ENCODE measurements at regions of chr9 and their contacts with region 1.

Region 1: DNA sequence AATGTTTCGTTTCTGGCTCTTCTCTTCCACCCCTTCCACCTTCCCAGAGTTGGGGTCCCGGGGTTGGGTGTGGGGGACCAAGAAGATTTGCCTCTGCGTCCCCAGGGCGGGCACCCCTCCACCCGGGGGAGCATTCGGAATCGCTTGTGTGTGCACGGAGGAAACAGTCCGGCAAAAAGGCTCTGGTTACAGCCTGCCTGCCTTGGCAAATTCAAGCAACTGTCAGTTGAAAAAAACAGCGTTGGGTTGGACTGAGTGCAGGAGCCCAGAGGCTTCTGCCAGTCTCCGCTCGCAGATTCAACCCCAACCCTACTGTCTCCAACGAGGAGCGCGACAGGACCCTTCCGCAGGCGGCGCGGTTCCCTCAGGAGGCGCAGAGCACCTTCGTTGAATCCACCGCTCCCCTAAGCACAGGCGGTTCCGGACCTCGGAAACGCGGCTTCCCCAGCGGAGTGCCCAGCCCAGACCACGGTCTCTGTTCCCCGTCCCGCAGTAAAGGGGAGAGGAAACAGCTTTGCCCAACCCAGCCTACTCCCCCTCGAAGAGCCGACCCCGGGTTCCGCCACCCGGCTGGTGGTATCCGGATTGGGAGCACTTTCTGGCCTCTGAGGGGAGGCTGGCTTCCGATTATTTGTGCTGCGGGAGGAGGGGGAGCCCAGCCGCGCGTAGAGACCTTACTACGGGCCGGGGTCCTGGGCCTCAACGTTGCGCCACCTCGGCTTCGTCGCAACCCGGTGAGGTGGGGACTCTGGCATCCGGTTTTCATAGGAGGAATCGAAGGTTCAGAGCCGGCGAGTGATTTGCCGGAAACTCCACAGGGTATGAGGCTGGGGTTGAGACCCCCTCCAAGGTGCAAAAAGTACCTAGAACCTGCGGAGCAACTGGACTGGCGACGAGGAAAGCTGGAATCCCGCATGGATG is 9.6 kb downstream of the LHX6 start:
- DNase-seq: peak; percentile 78

Region 2: DNA sequence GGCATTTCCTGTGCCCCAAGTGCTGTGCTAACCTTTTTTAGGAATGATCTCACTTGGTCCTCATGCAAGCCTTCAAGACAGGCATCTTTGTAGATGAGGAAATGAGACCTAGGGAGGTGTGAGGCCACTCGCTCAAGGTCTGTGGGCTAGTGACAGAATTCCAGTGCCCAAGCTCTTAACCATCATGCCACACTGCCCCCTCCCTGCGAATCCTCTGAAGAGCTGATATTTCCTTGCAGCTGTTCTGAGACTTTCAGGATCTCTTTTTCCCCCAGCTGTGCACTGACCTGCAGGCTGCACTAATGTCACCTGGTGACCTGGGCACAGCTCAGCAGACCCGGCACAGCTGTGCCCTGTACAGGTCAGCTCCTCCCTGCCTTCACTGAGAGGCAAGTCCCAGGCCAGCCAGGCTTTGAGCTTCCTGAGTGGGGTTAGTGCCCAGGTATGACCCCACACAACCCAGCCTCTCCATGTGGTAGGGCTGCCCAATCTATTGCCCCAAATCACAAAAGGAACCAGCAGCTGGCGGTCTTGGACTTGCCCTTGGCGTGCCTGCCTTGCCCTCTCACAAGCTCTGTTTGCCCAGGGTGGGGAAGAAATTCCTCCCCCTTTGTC is 26.8 kb before region 1 on chr9:
- intact Hi-C with region 1: loop called in 1 of 2 experiments (anchors 1 kb)
- DNase-seq: peak; percentile 54

Region 3: GRCh38 chr9:122418016-122418415 is 198.8 kb after region 1 on chr9:
- intact Hi-C with region 1: no loop called
- DNase-seq: no peak

Measured in posterior vena cava (tissue), 2 donors.